MCF 10A (cell line): ENCODE measurements at regions of chr17 and their contacts with region 1.

Region 1: GRCh38 chr17:36629252-36629847 is 28.0 kb downstream of the MRM1 start:
- DNase-seq: peak; percentile 70
- H3K4me3 Mint-ChIP-seq: no peak overlapping the region
- H3K27ac Mint-ChIP-seq: no peak overlapping the region
- H3K4me1 Mint-ChIP-seq: no peaks in the 10 kb centered on the region
- H3K27me3 Mint-ChIP-seq: peaks cover 34% of the 10 kb centered on the region
- CTCF ChIP-seq: peak; percentile 99

Region 2: GRCh38 chr17:36655726-36656125 is 26.4 kb after region 1 on chr17:
- CTCF ChIA-PET with region 1: interaction called, 13 read pairs
- POLR2A ChIA-PET with region 1: no interaction called
- intact Hi-C with region 1: no loop called
- DNase-seq: no peak
- H3K4me3 Mint-ChIP-seq: no peak overlapping the region
- H3K27ac Mint-ChIP-seq: no peak overlapping the region
- H3K4me1 Mint-ChIP-seq: peaks cover 11% of the 10 kb centered on the region
- H3K27me3 Mint-ChIP-seq: peaks cover 33% of the 10 kb centered on the region
- CTCF ChIP-seq: no peak

Region 3: DNA sequence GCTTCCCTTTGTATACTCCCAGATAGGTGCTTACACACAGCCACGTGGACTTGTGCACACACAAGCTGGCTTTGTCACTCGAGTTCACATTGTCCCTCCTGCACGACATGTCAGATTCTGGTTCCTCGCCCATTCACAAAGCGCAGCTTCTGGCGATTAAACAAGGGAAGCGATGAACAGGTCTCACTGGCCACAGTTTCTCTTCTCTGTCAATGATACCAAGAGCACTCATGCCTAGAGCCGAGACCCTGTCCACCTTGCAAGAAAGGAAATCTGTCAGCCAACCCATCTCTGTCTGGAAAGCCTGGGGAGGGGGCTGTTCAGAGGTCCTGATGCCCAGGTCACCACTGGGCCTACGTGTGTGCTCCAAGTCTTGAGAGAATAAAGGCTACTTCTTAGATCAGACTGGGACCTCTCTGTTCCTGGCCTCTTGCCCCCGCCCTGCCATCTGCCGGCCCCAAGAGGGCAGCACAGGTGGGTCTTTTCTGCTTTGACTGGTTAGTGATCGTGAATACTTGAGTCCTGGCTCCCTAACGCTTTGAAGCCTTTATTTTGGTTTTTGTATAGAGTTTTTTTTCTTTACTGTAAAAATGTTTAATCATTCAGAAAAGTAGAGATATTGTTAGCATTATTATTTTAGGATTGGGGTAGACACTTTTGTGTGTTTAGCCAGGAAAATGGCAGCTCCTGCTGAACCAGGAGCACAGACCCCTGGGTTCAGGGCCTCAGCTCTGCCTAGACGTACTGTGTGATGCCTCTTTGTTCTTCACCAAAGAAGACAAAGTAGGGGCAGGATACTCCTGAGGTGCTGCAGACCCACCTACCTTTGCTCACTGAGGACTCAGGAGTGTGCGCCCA is 76.8 kb after region 1 on chr17:
- CTCF ChIA-PET with region 1: interaction called, 3 read pairs
- POLR2A ChIA-PET with region 1: no interaction called
- intact Hi-C with region 1: loop called (anchors 1 kb)
- DNase-seq: peak; percentile 58
- H3K4me3 Mint-ChIP-seq: no peak overlapping the region
- H3K27ac Mint-ChIP-seq: no peak overlapping the region
- H3K4me1 Mint-ChIP-seq: peaks cover 5% of the 10 kb centered on the region
- H3K27me3 Mint-ChIP-seq: peaks cover 50% of the 10 kb centered on the region
- CTCF ChIP-seq: peak; percentile 76

Region 4: DNA sequence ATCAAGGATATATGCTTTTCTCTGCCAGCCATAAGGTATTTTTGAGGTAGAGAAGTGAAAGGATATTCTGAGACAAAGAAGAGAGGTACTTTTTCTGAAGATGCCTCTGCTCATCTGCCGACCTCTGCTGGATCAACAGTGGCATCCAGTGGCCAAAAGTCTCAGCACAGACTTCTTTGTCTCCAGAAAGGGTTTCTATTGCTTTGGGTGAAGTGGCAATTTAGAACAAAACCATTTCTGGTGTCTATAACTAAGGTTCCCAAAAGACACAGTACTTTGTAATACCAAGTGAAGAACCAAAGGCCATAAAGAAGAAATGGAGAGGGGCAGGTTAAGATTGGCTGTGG is 591.2 kb after region 1 on chr17:
- CTCF ChIA-PET with region 1: interaction called, 6 read pairs
- POLR2A ChIA-PET with region 1: no interaction called
- intact Hi-C with region 1: loop called (anchors 5 kb)
- DNase-seq: peak; percentile 8
- H3K4me3 Mint-ChIP-seq: no peak overlapping the region
- H3K27ac Mint-ChIP-seq: peak overlapping the region; percentile 83
- H3K4me1 Mint-ChIP-seq: peaks cover 11% of the 10 kb centered on the region
- H3K27me3 Mint-ChIP-seq: no peaks in the 10 kb centered on the region
- CTCF ChIP-seq: peak; percentile 47

Region 5: DNA sequence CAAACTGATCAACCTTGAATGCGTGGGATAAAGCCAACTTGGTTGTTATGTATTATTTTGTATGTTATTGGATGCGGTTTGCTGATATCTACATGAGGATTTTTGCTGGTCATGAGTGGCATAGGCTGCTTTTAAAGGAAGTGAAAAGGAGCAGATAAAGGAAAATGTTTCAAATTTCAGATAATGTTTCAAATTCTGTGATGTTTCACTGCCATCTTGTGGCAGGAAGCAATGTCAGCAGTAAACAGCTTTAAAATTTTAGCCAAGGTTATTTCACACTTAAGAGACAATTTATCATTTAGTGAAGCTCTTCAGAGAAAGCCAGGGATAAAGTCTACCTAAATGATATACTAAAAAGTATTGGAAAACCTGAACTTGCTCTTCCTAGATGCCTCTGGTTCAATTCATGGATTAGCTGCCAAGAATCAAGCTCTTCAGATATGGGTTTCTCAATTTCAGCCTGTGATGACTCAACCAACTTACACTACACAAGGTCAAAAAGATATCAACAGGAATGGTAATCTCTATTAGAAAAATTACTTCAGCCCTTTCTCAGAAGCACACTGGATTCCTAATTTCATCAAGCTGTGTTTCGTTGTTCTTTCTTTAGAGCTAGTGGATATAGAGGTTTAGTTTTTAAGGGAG is 610.5 kb after region 1 on chr17:
- CTCF ChIA-PET with region 1: interaction called, 3 read pairs
- POLR2A ChIA-PET with region 1: no interaction called
- intact Hi-C with region 1: loop called (anchors 5 kb)
- DNase-seq: peak; percentile 46
- H3K4me3 Mint-ChIP-seq: no peak overlapping the region
- H3K27ac Mint-ChIP-seq: no peak overlapping the region
- H3K4me1 Mint-ChIP-seq: peaks cover 10% of the 10 kb centered on the region
- H3K27me3 Mint-ChIP-seq: no peaks in the 10 kb centered on the region
- CTCF ChIP-seq: peak; percentile 55